ENCODE measurements at regions of chr14 and their contacts with region 1.

Region 1: GRCh38 chr14:104196461-104197140 is 58.2 kb downstream of the KIF26A start:
- DNase-seq: no peak
- H3K4me3 ChIP-seq: no peak overlapping the region
- H3K27ac ChIP-seq: no peak overlapping the region
- H3K4me1 ChIP-seq: no peaks in the 10 kb centered on the region
- H3K27me3 ChIP-seq: no peaks in the 10 kb centered on the region
- CTCF ChIP-seq: no peak

Region 2: DNA sequence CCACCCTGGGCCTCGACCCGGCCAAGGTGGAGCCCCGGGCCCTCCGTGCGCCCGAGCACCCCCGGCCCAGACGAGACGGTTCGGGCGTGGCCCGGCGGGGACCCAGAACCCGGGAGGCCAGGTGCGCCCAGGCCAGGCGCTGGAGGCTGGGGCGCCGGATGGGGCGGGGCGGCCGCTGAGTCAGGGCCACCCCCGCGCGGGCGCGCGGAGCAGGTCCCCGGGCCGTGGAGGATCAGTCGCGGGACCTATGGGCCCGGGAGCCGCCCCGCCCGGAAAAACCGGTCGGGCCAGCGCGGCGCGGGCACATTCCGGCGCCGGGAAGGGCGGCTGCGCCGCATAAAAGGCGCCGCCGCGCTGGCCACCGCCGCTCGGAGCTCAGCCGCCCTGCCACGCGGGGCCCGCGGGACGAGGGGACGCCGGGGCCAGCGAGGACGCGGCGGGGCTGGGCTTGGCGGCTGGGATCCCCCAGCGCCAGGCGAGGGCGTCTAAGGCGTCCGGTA is 79.8 kb before region 1 on chr14:
- CTCF ChIA-PET with region 1: no interaction called
- dilution Hi-C with region 1: no loop called
- in situ Hi-C with region 1: no loop called
- intact Hi-C with region 1: no loop called
- DNase-seq: peak; percentile 63
- H3K4me3 ChIP-seq: peak overlapping the region; percentile 55 to 66 (median 60)
- H3K27ac ChIP-seq: no peak overlapping the region
- H3K4me1 ChIP-seq: peaks cover 19% of the 10 kb centered on the region
- H3K27me3 ChIP-seq: peaks cover 14% of the 10 kb centered on the region
- CTCF ChIP-seq: no peak

Region 3: GRCh38 chr14:104210041-104210816 is 13.6 kb after region 1 on chr14:
- CTCF ChIA-PET with region 1: no interaction called
- dilution Hi-C with region 1: no loop called
- in situ Hi-C with region 1: no loop called
- intact Hi-C with region 1: no loop called
- DNase-seq: no peak
- H3K4me3 ChIP-seq: no peak overlapping the region
- H3K27ac ChIP-seq: no peak overlapping the region
- H3K4me1 ChIP-seq: no peaks in the 10 kb centered on the region
- H3K27me3 ChIP-seq: no peaks in the 10 kb centered on the region
- CTCF ChIP-seq: no peak

Region 4: DNA sequence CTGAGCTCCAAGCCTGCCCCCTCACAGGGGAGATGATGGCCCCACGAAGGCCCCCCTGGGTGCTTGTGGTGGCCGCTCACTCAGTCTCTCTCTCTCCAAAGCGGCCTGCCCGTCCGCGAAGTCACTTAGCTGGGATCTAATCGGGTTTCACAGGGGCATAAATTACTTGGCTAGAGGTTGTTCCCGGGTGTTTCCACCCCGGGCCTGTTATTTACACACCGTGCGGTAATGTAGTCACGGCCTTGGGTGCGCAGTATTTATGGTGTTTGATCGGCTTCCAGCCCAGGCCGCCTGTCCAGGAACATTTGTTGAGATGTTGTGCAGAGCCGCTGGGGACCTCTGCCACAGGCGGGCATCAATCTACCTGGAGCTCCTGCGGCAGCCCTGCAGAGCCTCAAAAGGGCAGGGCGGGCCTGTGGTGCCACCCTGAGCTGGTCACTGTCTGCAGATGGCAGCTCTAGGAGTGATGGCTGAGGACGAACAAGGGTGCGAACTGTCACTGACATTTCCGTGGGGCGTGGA is 33.0 kb after region 1 on chr14:
- CTCF ChIA-PET with region 1: no interaction called
- dilution Hi-C with region 1: loop called (anchors 5 kb)
- in situ Hi-C with region 1: no loop called
- intact Hi-C with region 1: no loop called
- DNase-seq: no peak
- H3K4me3 ChIP-seq: no peak overlapping the region
- H3K27ac ChIP-seq: no peak overlapping the region
- H3K4me1 ChIP-seq: no peaks in the 10 kb centered on the region
- H3K27me3 ChIP-seq: no peaks in the 10 kb centered on the region
- CTCF ChIP-seq: no peak

Region 5: GRCh38 chr14:104277416-104278213 is 81.0 kb after region 1 on chr14:
- CTCF ChIA-PET with region 1: no interaction called
- dilution Hi-C with region 1: loop called (anchors 10 kb)
- in situ Hi-C with region 1: no loop called
- intact Hi-C with region 1: no loop called
- DNase-seq: peak; percentile 1
- H3K4me3 ChIP-seq: no peak overlapping the region
- H3K27ac ChIP-seq: no peak overlapping the region
- H3K4me1 ChIP-seq: no peaks in the 10 kb centered on the region
- H3K27me3 ChIP-seq: no peaks in the 10 kb centered on the region
- CTCF ChIP-seq: no peak

Region 6: DNA sequence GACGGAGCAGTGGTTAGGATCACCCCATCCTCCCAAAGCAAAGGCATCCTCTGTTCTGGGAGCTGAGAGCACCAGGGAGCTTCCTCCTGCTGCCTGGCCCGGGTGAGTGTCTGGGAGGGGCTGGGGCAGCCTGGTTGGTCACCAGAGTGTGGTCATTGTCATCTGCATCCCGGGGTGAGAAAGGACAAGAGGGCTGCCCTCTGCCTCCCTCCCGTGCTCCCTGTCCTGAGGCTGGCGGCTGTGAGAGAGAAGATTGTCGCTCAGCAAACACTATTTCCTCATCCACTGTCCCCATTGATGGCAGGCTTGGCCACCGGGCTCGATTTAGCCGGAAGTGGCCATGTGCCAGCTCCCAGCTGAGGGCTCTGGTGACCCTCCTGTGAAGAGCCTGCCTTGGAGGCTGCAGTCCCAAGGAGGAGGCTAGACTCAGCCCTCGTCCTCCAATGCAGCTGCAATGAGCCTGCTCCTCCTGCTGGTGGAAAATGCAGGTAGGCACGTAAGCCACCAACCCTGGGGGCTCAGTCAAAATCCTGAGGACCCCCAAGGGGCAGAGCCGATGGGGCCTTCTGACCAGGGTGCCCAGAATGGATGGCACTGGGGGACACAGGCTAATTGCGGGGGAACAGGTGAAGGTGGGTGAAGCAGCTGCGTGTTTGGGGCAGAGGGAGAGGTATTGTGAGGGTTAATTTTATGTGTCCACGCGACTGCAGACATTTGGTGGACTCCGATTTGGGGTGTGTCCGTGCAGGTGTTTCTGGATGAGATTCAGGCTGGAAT is 97.4 kb after region 1 on chr14:
- CTCF ChIA-PET with region 1: no interaction called
- dilution Hi-C with region 1: loop called (anchors 5 kb)
- in situ Hi-C with region 1: no loop called
- intact Hi-C with region 1: no loop called
- DNase-seq: no peak
- H3K4me3 ChIP-seq: no peak overlapping the region
- H3K27ac ChIP-seq: no peak overlapping the region
- H3K4me1 ChIP-seq: no peaks in the 10 kb centered on the region
- H3K27me3 ChIP-seq: no peaks in the 10 kb centered on the region
- CTCF ChIP-seq: no peak

Region 7: DNA sequence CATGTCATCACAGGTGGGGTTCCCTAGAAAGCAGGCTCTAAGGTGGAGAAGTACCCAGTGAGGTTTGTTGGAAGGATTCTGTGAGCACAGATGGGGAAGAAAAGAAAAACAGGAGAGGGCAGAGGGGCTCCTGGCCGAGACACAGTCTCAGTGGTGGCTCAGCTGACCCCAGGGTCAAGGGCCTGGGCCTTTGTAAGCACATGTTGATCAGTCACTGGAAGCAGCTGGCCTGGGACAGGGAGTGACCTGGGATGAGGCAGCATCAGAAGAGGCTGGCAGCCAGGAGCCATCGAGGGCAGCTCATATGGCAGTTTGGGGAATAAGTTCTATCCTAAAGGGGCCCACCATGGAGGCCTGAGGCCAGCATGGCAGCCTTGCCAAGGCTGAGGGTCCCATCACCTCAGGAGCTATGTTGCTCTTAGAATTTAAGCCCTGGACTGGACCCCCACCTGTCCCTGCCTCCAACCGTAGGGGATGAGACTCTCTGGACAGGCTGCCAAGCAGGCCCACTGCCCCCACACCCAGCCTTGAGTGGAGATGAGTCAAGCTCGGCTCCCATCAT is 414.2 kb after region 1 on chr14:
- CTCF ChIA-PET with region 1: no interaction called
- dilution Hi-C with region 1: loop called (anchors 10 kb)
- in situ Hi-C with region 1: no loop called
- intact Hi-C with region 1: no loop called
- DNase-seq: no peak
- H3K4me3 ChIP-seq: no peak overlapping the region
- H3K27ac ChIP-seq: no peak overlapping the region
- H3K4me1 ChIP-seq: no peaks in the 10 kb centered on the region
- H3K27me3 ChIP-seq: no peaks in the 10 kb centered on the region
- CTCF ChIP-seq: no peak

Measured in mammary epithelial cell (primary cell).